PC-9 (cell line): ENCODE measurements at regions of chr15 and their contacts with region 1.

Region 1: GRCh38 chr15:67839929-67840748 is at the start of gene RNU6-1:
- DNase-seq: peak; percentile 71 to 88
- H3K4me3 ChIP-seq: peak within 1 kb of the TSS; percentile 69
- H3K27ac ChIP-seq: peak within 1 kb of the TSS; percentile 73
- H3K4me1 ChIP-seq: peaks cover 10% of the 10 kb centered on the region
- H3K27me3 ChIP-seq: no peaks in the 10 kb centered on the region
- CTCF ChIP-seq: no peak
- total RNA-seq, gene RNU6-1: not detected in 2 replicates

Region 2: GRCh38 chr15:67048281-67049279 is 791.6 kb before region 1 on chr15:
- CTCF ChIA-PET with region 1: no interaction called
- POLR2A ChIA-PET with region 1: no interaction called
- intact Hi-C with region 1: loop called (anchors 10 kb)
- DNase-seq: peak; percentile 73 to 93
- H3K4me3 ChIP-seq: no peak overlapping the region
- H3K27ac ChIP-seq: peak overlapping the region; percentile 98
- H3K4me1 ChIP-seq: peaks cover 44% of the 10 kb centered on the region
- H3K27me3 ChIP-seq: no peaks in the 10 kb centered on the region
- CTCF ChIP-seq: no peak

Region 3: GRCh38 chr15:67188551-67189218 is 651.5 kb before region 1 on chr15:
- CTCF ChIA-PET with region 1: no interaction called
- POLR2A ChIA-PET with region 1: no interaction called
- intact Hi-C with region 1: no loop called
- DNase-seq: no peak
- H3K4me3 ChIP-seq: no peak overlapping the region
- H3K27ac ChIP-seq: 0 out of 2 replicates have a peak overlapping the region, but pooled peaks have one; percentile 23
- H3K4me1 ChIP-seq: no peaks in the 10 kb centered on the region
- H3K27me3 ChIP-seq: no peaks in the 10 kb centered on the region
- CTCF ChIP-seq: no peak

Region 4: DNA sequence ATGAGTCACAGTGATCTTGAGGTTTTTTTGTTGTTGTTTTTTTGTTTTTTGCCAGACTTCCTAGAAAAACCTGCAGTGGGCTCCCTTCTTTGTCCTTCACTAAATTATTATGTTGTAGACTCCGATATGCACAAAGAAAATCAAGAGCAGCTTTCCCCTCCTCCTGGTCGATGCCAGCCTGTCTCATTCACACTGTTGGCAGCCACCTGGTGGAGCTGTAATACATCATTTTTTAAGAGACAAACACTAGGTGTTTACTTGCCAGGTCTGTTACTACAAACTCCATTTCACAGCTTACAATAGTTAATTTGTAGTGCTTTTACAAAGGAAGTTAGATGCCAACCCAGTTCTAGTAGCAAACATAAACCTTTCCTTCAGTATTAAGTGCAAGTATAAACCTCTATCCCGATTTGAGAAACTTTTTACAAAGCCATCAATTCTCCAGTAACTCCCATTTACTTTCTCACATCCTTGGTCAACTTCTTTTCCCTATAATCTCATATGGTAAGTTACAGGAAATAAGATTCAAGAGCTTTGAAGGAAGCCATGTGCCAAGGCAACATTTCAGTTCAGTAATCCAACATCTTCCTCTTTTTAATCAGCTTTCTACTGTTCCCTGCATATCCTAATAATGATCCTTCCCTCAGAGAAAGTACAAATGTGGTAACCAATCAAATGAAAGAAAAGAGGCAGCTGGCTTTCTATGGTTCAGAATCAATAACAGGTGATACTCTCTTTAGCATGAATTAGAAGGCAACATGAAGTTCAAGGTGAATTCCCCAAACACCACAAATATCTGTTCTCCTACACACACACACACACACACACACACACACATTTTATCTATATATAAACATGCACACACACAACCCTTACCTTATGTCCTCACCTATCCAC is 599.7 kb before region 1 on chr15:
- CTCF ChIA-PET with region 1: no interaction called
- POLR2A ChIA-PET with region 1: no interaction called
- intact Hi-C with region 1: loop called (anchors 10 kb)
- DNase-seq: peak in 1 of 2 experiments; percentile 11
- H3K4me3 ChIP-seq: no peak overlapping the region
- H3K27ac ChIP-seq: no peak overlapping the region
- H3K4me1 ChIP-seq: peaks cover 4% of the 10 kb centered on the region
- H3K27me3 ChIP-seq: no peaks in the 10 kb centered on the region
- CTCF ChIP-seq: peak; percentile 52; the same call in 1 of the 2 replicates

Region 5: GRCh38 chr15:67383899-67384298 is 456.2 kb before region 1 on chr15:
- CTCF ChIA-PET with region 1: no interaction called
- POLR2A ChIA-PET with region 1: no interaction called
- intact Hi-C with region 1: loop called (anchors 2 kb)
- DNase-seq: no peak
- H3K4me3 ChIP-seq: no peak overlapping the region
- H3K27ac ChIP-seq: no peak overlapping the region
- H3K4me1 ChIP-seq: no peaks in the 10 kb centered on the region
- H3K27me3 ChIP-seq: no peaks in the 10 kb centered on the region
- CTCF ChIP-seq: peak; percentile 39; the same call in 1 of the 2 replicates

Region 6: DNA sequence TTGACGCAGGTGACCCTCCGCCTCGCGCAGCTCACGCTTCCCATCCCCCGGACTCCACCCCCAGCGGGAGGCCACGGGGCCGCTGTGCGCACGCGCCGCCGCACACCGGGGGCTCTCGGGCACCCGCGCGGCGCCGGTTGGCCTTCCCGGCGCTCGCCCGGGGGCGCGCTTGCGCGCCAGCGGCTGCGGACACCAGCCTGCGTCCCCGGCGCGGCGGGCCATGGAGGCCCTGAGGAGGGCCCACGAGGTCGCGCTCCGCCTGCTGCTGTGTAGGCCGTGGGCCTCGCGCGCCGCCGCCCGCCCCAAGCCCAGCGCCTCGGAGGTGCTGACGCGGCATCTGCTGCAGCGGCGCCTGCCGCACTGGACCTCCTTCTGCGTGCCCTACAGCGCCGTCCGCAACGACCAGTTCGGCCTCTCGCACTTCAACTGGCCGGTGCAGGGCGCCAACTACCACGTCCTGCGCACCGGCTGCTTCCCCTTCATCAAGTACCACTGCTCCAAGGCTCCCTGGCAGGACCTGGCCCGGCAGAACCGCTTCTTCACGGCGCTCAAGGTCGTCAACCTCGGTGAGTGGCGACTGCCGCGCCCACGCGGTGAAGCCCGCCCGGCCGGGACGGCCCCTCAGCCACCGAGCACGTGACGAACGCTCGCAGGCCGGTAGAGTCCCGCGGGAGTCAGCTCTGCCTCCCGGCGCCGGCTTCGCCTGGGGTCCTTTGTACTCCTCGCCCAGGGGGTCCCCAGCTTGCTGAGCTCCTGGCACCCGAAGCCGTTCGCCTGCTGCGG is 318.9 kb before region 1 on chr15 and contains the start of gene C15orf61:
- CTCF ChIA-PET with region 1: no interaction called
- POLR2A ChIA-PET with region 1: no interaction called
- intact Hi-C with region 1: loop called (anchors 5 kb)
- DNase-seq: peak; percentile 69 to 95
- H3K4me3 ChIP-seq: peak within 1 kb of the TSS; percentile 83
- H3K27ac ChIP-seq: peak within 1 kb of the TSS; percentile 85
- H3K4me1 ChIP-seq: peaks cover 17% of the 10 kb centered on the region
- H3K27me3 ChIP-seq: no peaks in the 10 kb centered on the region
- CTCF ChIP-seq: no peak
- total RNA-seq, gene C15orf61: 6.5 and 6.8 TPM in 2 replicates

Region 7: DNA sequence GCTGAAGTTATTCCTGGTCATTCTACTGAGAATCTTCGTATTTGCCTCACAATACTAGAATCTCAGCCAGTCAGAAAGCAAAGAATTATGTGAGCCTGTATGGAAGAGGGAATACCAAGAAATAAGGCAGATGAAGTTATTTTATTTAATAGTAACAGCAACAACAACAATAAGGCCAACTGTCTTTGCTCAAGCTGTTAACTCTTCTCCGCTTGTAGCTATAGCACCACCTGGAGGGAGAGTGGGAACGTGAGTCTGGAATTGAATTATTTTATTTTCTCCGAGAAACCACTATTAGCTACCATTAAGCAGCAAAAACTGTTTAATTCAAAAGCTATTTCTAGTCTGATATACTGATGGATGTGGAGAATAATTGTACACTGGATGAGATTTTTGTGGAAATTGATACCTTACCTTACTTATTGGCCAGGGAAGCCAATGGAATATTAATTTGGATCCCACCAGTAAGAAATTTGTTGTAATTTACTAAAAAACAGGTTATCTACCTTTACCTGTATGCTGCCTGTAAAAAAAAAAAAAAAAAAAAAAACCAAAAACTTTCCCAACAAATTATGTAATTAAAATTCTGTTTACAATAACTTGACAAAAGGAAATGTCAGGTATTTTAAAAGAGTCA is 314.9 kb after region 1 on chr15:
- CTCF ChIA-PET with region 1: interaction called, 3 read pairs
- POLR2A ChIA-PET with region 1: no interaction called
- intact Hi-C with region 1: loop called (anchors 1 kb)
- DNase-seq: peak in 1 of 2 experiments; percentile 25
- H3K4me3 ChIP-seq: no peak overlapping the region
- H3K27ac ChIP-seq: no peak overlapping the region
- H3K4me1 ChIP-seq: no peaks in the 10 kb centered on the region
- H3K27me3 ChIP-seq: no peaks in the 10 kb centered on the region
- CTCF ChIP-seq: peak; percentile 70